CD4-positive, alpha-beta T cell (primary cell): ENCODE measurements at regions of chr7 and their contacts with region 1.

Region 1: GRCh38 chr7:92590711-92591310 is 621 bp upstream of the FAM133B start:
- DNase-seq: peak in 3 of 14 experiments; percentile 6 to 24 (median 7)
- ATAC-seq: no peak
- H3K4me3 ChIP-seq: peak overlapping the region; percentile 85
- H3K4me3 Mint-ChIP-seq: peak overlapping the region; percentile 91
- H3K27ac ChIP-seq: no peak overlapping the region
- H3K27ac Mint-ChIP-seq: peak overlapping the region; percentile 95
- H3K4me1 ChIP-seq: peaks cover 30% of the 10 kb centered on the region
- H3K4me1 Mint-ChIP-seq: peaks cover 52% of the 10 kb centered on the region
- H3K27me3 ChIP-seq: no peaks in the 10 kb centered on the region
- H3K27me3 Mint-ChIP-seq: no peaks in the 10 kb centered on the region
- CTCF ChIP-seq: no peak

Region 2: GRCh38 chr7:92513167-92513902 is 77.5 kb before region 1 on chr7:
- CTCF ChIA-PET with region 1: no interaction called
- POLR2A ChIA-PET with region 1: no interaction called
- intact Hi-C with region 1: no loop called
- DNase-seq: no peak
- ATAC-seq: no peak
- H3K4me3 ChIP-seq: no peak overlapping the region
- H3K4me3 Mint-ChIP-seq: no peak overlapping the region
- H3K27ac ChIP-seq: no peak overlapping the region
- H3K27ac Mint-ChIP-seq: no peak overlapping the region
- H3K4me1 ChIP-seq: no peaks in the 10 kb centered on the region
- H3K4me1 Mint-ChIP-seq: no peaks in the 10 kb centered on the region
- H3K27me3 ChIP-seq: no peaks in the 10 kb centered on the region
- H3K27me3 Mint-ChIP-seq: no peaks in the 10 kb centered on the region
- CTCF ChIP-seq: no peak

Region 3: GRCh38 chr7:92569134-92569533 is 21.7 kb before region 1 on chr7:
- CTCF ChIA-PET with region 1: no interaction called
- POLR2A ChIA-PET with region 1: no interaction called
- intact Hi-C with region 1: loop called in 1 of 2 experiments (anchors 1 kb)
- DNase-seq: no peak
- ATAC-seq: no peak
- H3K4me3 ChIP-seq: no peak overlapping the region
- H3K4me3 Mint-ChIP-seq: no peak overlapping the region
- H3K27ac ChIP-seq: no peak overlapping the region
- H3K27ac Mint-ChIP-seq: no peak overlapping the region
- H3K4me1 ChIP-seq: no peaks in the 10 kb centered on the region
- H3K4me1 Mint-ChIP-seq: no peaks in the 10 kb centered on the region
- H3K27me3 ChIP-seq: no peaks in the 10 kb centered on the region
- H3K27me3 Mint-ChIP-seq: no peaks in the 10 kb centered on the region
- CTCF ChIP-seq: no peak

Region 4: GRCh38 chr7:92609921-92610518 is 19.2 kb after region 1 on chr7:
- CTCF ChIA-PET with region 1: interaction called, 6 read pairs
- POLR2A ChIA-PET with region 1: interaction called, 4 read pairs
- intact Hi-C with region 1: loop called in 1 of 2 experiments (anchors 2 kb)
- DNase-seq: peak in 3 of 14 experiments; percentile 36 to 44 (median 37)
- ATAC-seq: peak; percentile 69
- H3K4me3 ChIP-seq: no peak overlapping the region
- H3K4me3 Mint-ChIP-seq: no peak overlapping the region
- H3K27ac ChIP-seq: no peak overlapping the region
- H3K27ac Mint-ChIP-seq: peak overlapping the region; percentile 13
- H3K4me1 ChIP-seq: no peaks in the 10 kb centered on the region
- H3K4me1 Mint-ChIP-seq: peaks cover 6% of the 10 kb centered on the region
- H3K27me3 ChIP-seq: no peaks in the 10 kb centered on the region
- H3K27me3 Mint-ChIP-seq: no peaks in the 10 kb centered on the region
- CTCF ChIP-seq: peak; percentile 42

Region 5: GRCh38 chr7:92621026-92621540 is 30.3 kb after region 1 on chr7:
- CTCF ChIA-PET with region 1: no interaction called
- POLR2A ChIA-PET with region 1: no interaction called
- intact Hi-C with region 1: no loop called
- DNase-seq: peak; percentile 55 to 91 (median 72)
- ATAC-seq: peak; percentile 92
- H3K4me3 ChIP-seq: no peak overlapping the region
- H3K4me3 Mint-ChIP-seq: peak overlapping the region; percentile 1
- H3K27ac ChIP-seq: peak overlapping the region in 1 of 2 donors; percentile 25
- H3K27ac Mint-ChIP-seq: peak overlapping the region; percentile 18
- H3K4me1 ChIP-seq: peaks cover 8% of the 10 kb centered on the region
- H3K4me1 Mint-ChIP-seq: peaks cover 18% of the 10 kb centered on the region
- H3K27me3 ChIP-seq: no peaks in the 10 kb centered on the region
- H3K27me3 Mint-ChIP-seq: no peaks in the 10 kb centered on the region
- CTCF ChIP-seq: peak; percentile 85

Region 6: GRCh38 chr7:92691578-92691977 is 100.8 kb after region 1 on chr7:
- CTCF ChIA-PET with region 1: no interaction called
- POLR2A ChIA-PET with region 1: no interaction called
- intact Hi-C with region 1: no loop called
- DNase-seq: peak in 4 of 14 experiments; percentile 26 to 74 (median 68)
- ATAC-seq: peak; percentile 90
- H3K4me3 ChIP-seq: no peak overlapping the region
- H3K4me3 Mint-ChIP-seq: no peak overlapping the region
- H3K27ac ChIP-seq: no peak overlapping the region
- H3K27ac Mint-ChIP-seq: no peak overlapping the region
- H3K4me1 ChIP-seq: no peaks in the 10 kb centered on the region
- H3K4me1 Mint-ChIP-seq: peaks cover 17% of the 10 kb centered on the region
- H3K27me3 ChIP-seq: no peaks in the 10 kb centered on the region
- H3K27me3 Mint-ChIP-seq: no peaks in the 10 kb centered on the region
- CTCF ChIP-seq: peak; percentile 67